ENCODE measurements at regions of chr14 and their contacts with region 1.

Region 1: GRCh38 chr14:22973217-22974032 is 8.9 kb downstream of the AJUBA start:
- DNase-seq: peak; percentile 64
- H3K4me3 Mint-ChIP-seq: no peak overlapping the region
- H3K27ac Mint-ChIP-seq: no peak overlapping the region
- H3K4me1 Mint-ChIP-seq: no peaks in the 10 kb centered on the region
- H3K27me3 Mint-ChIP-seq: no peaks in the 10 kb centered on the region

Region 2: DNA sequence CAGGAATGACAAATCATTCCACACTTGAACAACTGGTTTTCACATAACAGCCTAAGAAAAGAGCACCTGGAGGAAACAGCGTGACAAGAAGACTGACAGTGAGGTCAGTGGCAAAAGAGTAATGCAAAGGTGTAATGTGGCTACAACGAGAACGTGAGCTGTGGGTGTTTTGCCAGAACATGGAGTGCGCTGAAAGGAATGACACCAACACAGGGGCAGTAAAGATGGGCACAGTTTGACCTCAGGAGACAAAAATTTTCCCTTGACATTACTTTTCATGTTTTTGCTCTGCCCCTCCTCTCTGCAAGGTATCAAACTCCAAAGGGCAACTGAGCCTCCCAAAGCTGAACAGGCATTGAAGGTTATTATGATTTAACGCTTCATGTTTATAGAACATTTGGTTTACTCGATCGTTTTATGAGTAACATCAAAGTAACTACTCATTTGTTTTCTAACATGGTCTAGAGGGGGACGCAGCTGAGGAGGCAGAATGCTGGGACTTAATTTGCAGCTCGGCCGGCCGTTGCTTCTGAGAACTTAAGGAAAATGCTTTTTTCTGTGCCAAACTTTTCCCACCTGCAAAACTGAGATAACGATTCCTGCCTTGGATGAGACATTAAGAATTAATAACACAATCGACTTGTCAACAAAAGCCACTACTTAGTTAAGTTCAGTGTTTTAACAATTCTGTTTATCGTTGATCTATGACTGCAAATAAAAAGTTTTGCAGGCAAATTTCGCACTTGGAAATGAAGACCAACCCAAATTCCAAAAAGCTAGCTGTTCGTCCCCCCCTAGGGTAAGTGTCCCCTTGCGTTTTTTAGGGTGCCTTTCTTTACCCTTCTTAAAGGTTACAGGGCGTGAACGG is 17.5 kb before region 1 on chr14:
- CTCF ChIA-PET with region 1: interaction called, 23 read pairs
- intact Hi-C with region 1: no loop called
- DNase-seq: no peak
- H3K4me3 Mint-ChIP-seq: peak overlapping the region; percentile 89
- H3K27ac Mint-ChIP-seq: peak overlapping the region; percentile 84
- H3K4me1 Mint-ChIP-seq: peaks cover 22% of the 10 kb centered on the region
- H3K27me3 Mint-ChIP-seq: no peaks in the 10 kb centered on the region

Region 3: GRCh38 chr14:22962061-22962676 is 11.3 kb before region 1 on chr14:
- CTCF ChIA-PET with region 1: interaction called, 34 read pairs
- intact Hi-C with region 1: no loop called
- DNase-seq: no peak
- H3K4me3 Mint-ChIP-seq: no peak overlapping the region
- H3K27ac Mint-ChIP-seq: no peak overlapping the region
- H3K4me1 Mint-ChIP-seq: peaks cover 5% of the 10 kb centered on the region
- H3K27me3 Mint-ChIP-seq: no peaks in the 10 kb centered on the region

Region 4: DNA sequence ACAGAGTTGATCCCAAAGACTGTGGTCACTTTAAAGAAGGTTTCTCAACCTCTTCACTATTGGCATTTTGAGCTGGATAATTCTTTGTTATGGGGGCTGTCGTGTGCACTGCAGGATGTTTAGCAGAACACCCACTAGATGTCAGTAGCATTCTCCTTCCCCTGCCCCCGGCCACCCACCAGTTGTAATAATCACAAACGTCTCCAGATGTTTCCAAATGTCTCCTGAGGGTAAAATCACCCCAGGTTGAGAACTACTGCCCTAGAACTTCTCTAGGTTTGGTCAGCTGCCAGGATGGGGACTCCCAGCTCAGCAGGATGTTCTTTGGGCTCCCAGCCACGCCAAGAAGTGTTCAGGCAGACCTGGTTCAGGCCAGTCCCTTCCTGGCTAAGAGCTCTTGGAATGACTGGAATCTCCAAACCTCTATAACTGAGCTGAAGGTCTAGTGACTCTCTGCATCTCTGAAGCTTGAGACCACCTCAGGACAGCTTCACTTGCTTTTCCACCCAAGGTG is 21.4 kb after region 1 on chr14:
- CTCF ChIA-PET with region 1: interaction called, 27 read pairs
- intact Hi-C with region 1: no loop called
- DNase-seq: peak; percentile 56
- H3K4me3 Mint-ChIP-seq: no peak overlapping the region
- H3K27ac Mint-ChIP-seq: no peak overlapping the region
- H3K4me1 Mint-ChIP-seq: no peaks in the 10 kb centered on the region
- H3K27me3 Mint-ChIP-seq: no peaks in the 10 kb centered on the region

Region 5: GRCh38 chr14:23174276-23175184 is 201.1 kb after region 1 on chr14:
- CTCF ChIA-PET with region 1: no interaction called
- intact Hi-C with region 1: no loop called
- DNase-seq: no peak
- H3K4me3 Mint-ChIP-seq: no peak overlapping the region
- H3K27ac Mint-ChIP-seq: no peak overlapping the region
- H3K4me1 Mint-ChIP-seq: peaks cover 31% of the 10 kb centered on the region
- H3K27me3 Mint-ChIP-seq: peaks cover 4% of the 10 kb centered on the region